ENCODE measurements at regions of chr14 and their contacts with region 1.

Region 1: GRCh38 chr14:34522496-34522895 is 17.0 kb downstream of the EAPP start:
- DNase-seq: no peak
- H3K4me3 ChIP-seq: no peak overlapping the region
- H3K27ac ChIP-seq: no peak overlapping the region
- H3K4me1 ChIP-seq: no peaks in the 10 kb centered on the region
- H3K27me3 ChIP-seq: no peaks in the 10 kb centered on the region
- CTCF ChIP-seq: no peak
- EP300 ChIP-seq: no peak
- POLR2A ChIP-seq: no peak

Region 2: GRCh38 chr14:34211732-34212131 is 310.8 kb before region 1 on chr14:
- intact Hi-C with region 1: loop called in 1 of 4 experiments (anchors 10 kb)
- DNase-seq: no peak
- H3K4me3 ChIP-seq: no peak overlapping the region
- H3K27ac ChIP-seq: no peak overlapping the region
- H3K4me1 ChIP-seq: no peaks in the 10 kb centered on the region
- H3K27me3 ChIP-seq: no peaks in the 10 kb centered on the region
- CTCF ChIP-seq: no peak
- EP300 ChIP-seq: no peak
- POLR2A ChIP-seq: no peak

Region 3: GRCh38 chr14:35533357-35534207 is 1011.1 kb after region 1 on chr14 and contains the start of gene INSM2:
- intact Hi-C with region 1: no loop called
- DNase-seq: peak in 3 of 5 donors; percentile 19 to 49 (median 21)
- H3K4me3 ChIP-seq: peak within 1 kb of the TSS; percentile 33
- H3K27ac ChIP-seq: no peak within 1 kb of the TSS
- H3K4me1 ChIP-seq: peaks cover 18% of the 10 kb centered on the region
- H3K27me3 ChIP-seq: peaks cover 4% of the 10 kb centered on the region
- CTCF ChIP-seq: no peak
- EP300 ChIP-seq: no peak
- POLR2A ChIP-seq: no peak
- total RNA-seq, gene INSM2: 0.11 TPM in 1 of 7 donors, not detected in the others

Measured in ovary (tissue), 10 donors.